HepG2 (cell line): ENCODE measurements at regions of chr5 and their contacts with region 1.

Region 1: DNA sequence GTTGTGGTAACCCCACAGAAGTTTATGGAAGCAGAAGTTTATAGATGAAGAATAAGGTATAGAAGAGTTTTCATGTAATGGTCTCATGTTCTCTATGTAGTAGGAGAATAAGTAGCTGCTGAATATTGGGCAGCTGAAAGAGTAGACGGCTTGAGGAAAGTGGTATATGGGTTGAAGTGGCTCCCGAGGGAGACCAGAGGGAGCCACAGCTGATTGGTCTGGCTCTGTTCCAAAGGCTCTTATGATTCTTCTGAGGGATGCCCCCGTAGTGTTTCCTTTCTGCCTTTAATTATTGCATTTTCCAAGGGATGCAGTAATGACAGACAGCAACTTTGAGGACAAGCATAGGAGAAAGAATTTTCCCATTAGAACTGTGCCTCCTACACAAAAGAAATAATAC is 30.1 kb upstream of the TENT2 start:
- DNase-seq: no peak
- ATAC-seq: no peak; the same call in 2 of the 3 replicates
- H3K4me3 ChIP-seq: peak overlapping the region in 1 of 3 experiments; percentile 53; a peak in 3 of 6 replicates
- H3K27ac ChIP-seq: peak overlapping the region; percentile 97
- H3K4me1 ChIP-seq: peaks cover 63% of the 10 kb centered on the region
- H3K27me3 ChIP-seq: no peaks in the 10 kb centered on the region
- CTCF ChIP-seq: no peak
- EP300 ChIP-seq: no peak
- POLR2A ChIP-seq: no peak
- RAD21 ChIP-seq: no peak

Region 2: DNA sequence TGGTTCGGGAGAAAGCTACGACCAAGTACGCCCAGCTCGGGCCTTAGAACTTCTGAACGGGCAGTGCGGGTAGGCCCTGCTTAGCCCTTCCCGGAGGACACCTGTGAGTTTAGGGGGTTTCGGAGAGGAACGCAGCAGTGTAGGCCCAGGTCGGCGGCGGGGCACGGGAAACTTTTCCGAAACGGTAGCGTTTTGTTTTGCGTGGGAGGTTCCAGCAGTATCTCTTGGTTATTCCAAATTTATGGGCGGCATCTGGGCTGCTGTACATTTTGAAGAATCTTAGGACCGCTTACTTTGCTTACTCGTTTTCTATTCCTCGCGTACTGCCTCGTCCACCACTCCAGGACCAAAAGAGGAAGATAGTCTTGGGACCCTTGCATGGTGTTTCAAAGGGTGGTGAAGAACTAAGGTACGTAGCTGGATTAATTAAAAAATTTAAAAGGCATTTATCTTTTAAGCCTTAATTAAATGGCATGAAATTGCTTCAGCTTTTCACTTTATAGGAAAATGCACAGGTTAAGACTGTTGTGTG is 30.5 kb after region 1 on chr5:
- CTCF ChIA-PET with region 1: no interaction called
- POLR2A ChIA-PET with region 1: interaction called, 11 read pairs
- in situ Hi-C with region 1: no loop called
- intact Hi-C with region 1: no loop called
- DNase-seq: peak; percentile 3
- ATAC-seq: peak; percentile 56
- H3K4me3 ChIP-seq: peak overlapping the region; percentile 74 to 96 (median 96)
- H3K27ac ChIP-seq: peak overlapping the region; percentile 94
- H3K4me1 ChIP-seq: peaks cover 33% of the 10 kb centered on the region
- H3K27me3 ChIP-seq: no peaks in the 10 kb centered on the region; a peak in 1 of 5 replicates
- CTCF ChIP-seq: no peak
- EP300 ChIP-seq: no peak
- POLR2A ChIP-seq: no peak
- RAD21 ChIP-seq: no peak

Region 3: DNA sequence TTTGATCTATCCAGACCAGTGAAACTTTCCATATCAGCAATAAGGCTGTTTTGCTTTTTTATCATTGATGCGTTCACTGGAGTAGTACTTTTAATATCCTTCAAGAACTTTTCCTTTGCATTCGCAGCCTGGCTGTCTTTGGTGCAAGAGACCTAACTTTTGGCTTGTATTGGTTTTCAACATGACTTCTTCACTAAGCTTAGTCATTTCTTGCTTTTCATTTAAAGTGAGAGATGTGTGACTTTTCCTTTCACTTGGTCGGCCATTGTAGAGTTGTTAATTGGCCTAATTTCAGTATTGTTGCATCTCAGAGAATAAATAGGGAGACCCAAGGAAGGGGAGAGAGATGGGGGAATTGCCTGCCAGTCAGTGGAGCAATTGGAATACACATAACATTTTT is 81.0 kb after region 1 on chr5:
- CTCF ChIA-PET with region 1: no interaction called
- POLR2A ChIA-PET with region 1: no interaction called
- in situ Hi-C with region 1: no loop called
- intact Hi-C with region 1: no loop called
- DNase-seq: no peak
- ATAC-seq: no peak
- H3K4me3 ChIP-seq: no peak overlapping the region
- H3K27ac ChIP-seq: no peak overlapping the region
- H3K4me1 ChIP-seq: no peaks in the 10 kb centered on the region
- H3K27me3 ChIP-seq: no peaks in the 10 kb centered on the region
- CTCF ChIP-seq: no peak
- EP300 ChIP-seq: no peak
- POLR2A ChIP-seq: no peak
- RAD21 ChIP-seq: no peak